Activated T-helper 2 cell treated with anti-CD3 and anti-CD28 coated beads, Interferon-gamma antibody, Interleukin-2, Interleukin-4, amounts not matched to agents 10 μg/mL and 5 μg/mL and 100 μg/mL, durations not matched to agents 14 hours and 24 hours and 36 hours (primary cell): ENCODE measurements at regions of chrX and their contacts with region 1.

Region 1: DNA sequence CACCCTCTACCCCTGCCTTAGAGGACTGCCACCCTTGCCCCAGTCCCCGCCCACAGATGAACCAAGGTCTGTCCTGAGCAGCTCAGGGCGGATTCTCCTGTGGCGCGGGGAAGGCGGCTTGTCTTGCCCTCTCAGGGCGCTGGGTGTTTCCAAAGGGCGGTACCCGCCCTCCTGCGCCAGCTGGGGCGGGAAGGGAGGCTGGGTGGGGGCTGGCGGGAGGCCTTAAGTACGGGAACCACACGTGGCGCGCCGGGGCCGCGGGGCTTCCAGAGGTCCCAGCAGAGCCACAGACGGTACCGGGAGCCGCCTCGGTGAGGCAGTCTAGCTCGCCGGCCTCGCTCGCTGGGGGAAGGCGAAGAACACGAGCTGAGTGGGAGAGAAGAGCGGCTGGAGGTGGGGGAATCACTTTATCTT is 361.1 kb downstream of the MID1IP1 start:
- DNase-seq: peak; percentile 24
- H3K4me3 Mint-ChIP-seq: peak overlapping the region; percentile 56
- H3K27ac Mint-ChIP-seq: peak overlapping the region; percentile 98
- H3K4me1 Mint-ChIP-seq: peaks cover 65% of the 10 kb centered on the region
- H3K27me3 Mint-ChIP-seq: no peaks in the 10 kb centered on the region

Region 2: DNA sequence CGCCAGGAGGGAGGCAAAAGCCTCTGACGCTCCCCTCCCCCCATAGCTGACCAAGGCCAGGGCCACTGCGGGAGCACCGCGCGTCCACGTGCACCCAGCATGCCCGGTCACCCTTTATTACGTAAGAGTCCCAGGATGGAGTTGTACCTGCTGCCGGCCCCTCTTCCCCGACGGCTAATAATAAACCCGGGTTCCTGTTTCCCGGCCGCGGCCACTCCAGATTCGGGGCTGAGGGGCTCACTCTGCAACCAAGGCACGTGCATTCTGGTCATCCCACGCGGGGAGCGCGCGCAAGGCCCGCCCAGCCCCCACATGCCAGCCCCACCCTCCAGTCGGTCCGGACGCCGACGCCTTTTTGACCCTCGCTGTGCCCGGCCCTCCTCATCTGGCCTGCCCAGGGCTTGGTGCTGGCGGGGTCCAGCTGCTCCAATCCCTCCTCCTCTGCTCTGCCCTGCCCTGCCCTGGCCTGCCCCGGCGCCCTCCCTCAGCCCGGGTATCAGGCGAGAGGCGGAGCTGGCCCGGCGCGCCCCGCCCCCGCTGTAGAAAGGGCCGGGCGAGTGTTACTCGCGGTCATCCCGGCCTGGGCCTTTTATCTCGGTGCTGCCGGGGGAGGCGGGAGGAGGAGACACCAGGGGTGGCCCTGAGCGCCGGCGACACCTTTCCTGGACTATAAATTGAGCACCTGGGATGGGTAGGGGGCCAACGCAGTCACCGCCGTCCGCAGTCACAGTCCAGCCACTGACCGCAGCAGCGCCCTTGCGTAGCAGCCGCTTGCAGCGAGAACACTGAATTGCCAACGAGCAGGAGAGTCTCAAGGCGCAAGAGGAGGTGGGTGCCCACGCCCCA is 358.5 kb before region 1 on chrX:
- intact Hi-C with region 1: loop called (anchors 5 kb)
- DNase-seq: peak; percentile 74
- H3K4me3 Mint-ChIP-seq: peak overlapping the region; percentile 100
- H3K27ac Mint-ChIP-seq: peak overlapping the region; percentile 98
- H3K4me1 Mint-ChIP-seq: peaks cover 15% of the 10 kb centered on the region
- H3K27me3 Mint-ChIP-seq: no peaks in the 10 kb centered on the region

Region 3: GRCh38 chrX:39196192-39197102 is 34.1 kb after region 1 on chrX:
- intact Hi-C with region 1: loop called (anchors 1 kb)
- DNase-seq: peak; percentile 60
- H3K4me3 Mint-ChIP-seq: peak overlapping the region; percentile 44
- H3K27ac Mint-ChIP-seq: peak overlapping the region; percentile 92
- H3K4me1 Mint-ChIP-seq: peaks cover 69% of the 10 kb centered on the region
- H3K27me3 Mint-ChIP-seq: no peaks in the 10 kb centered on the region

Region 4: DNA sequence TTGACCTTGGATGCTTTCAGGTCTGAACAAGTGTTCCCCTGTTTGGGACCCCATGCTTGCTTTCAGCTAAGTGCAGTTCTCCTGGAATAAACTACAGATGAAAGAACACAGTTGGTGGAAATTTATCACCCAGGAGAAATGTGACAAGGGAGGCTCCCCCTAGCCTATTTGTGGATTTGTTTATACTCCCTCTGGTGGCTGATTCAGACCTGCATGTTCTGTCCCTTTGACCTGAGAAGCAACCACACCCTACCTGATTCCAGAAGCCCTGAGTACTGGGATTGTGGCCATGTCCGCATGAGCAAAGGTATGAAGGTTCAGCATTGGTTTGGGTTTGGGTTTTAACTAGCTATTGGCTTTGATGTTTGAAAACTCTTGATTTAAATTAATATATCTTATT is 79.9 kb after region 1 on chrX:
- intact Hi-C with region 1: loop called (anchors 5 kb)
- DNase-seq: no peak
- H3K4me3 Mint-ChIP-seq: no peak overlapping the region
- H3K27ac Mint-ChIP-seq: no peak overlapping the region
- H3K4me1 Mint-ChIP-seq: peaks cover 24% of the 10 kb centered on the region
- H3K27me3 Mint-ChIP-seq: no peaks in the 10 kb centered on the region

Region 5: GRCh38 chrX:39261446-39262147 is 99.3 kb after region 1 on chrX:
- intact Hi-C with region 1: no loop called
- DNase-seq: no peak
- H3K4me3 Mint-ChIP-seq: no peak overlapping the region
- H3K27ac Mint-ChIP-seq: peak overlapping the region; percentile 75
- H3K4me1 Mint-ChIP-seq: peaks cover 40% of the 10 kb centered on the region
- H3K27me3 Mint-ChIP-seq: no peaks in the 10 kb centered on the region

Region 6: GRCh38 chrX:39491548-39492297 is 329.4 kb after region 1 on chrX:
- intact Hi-C with region 1: loop called (anchors 5 kb)
- DNase-seq: peak; percentile 39
- H3K4me3 Mint-ChIP-seq: peak overlapping the region; percentile 22
- H3K27ac Mint-ChIP-seq: peak overlapping the region; percentile 74
- H3K4me1 Mint-ChIP-seq: peaks cover 44% of the 10 kb centered on the region
- H3K27me3 Mint-ChIP-seq: no peaks in the 10 kb centered on the region

Region 7: DNA sequence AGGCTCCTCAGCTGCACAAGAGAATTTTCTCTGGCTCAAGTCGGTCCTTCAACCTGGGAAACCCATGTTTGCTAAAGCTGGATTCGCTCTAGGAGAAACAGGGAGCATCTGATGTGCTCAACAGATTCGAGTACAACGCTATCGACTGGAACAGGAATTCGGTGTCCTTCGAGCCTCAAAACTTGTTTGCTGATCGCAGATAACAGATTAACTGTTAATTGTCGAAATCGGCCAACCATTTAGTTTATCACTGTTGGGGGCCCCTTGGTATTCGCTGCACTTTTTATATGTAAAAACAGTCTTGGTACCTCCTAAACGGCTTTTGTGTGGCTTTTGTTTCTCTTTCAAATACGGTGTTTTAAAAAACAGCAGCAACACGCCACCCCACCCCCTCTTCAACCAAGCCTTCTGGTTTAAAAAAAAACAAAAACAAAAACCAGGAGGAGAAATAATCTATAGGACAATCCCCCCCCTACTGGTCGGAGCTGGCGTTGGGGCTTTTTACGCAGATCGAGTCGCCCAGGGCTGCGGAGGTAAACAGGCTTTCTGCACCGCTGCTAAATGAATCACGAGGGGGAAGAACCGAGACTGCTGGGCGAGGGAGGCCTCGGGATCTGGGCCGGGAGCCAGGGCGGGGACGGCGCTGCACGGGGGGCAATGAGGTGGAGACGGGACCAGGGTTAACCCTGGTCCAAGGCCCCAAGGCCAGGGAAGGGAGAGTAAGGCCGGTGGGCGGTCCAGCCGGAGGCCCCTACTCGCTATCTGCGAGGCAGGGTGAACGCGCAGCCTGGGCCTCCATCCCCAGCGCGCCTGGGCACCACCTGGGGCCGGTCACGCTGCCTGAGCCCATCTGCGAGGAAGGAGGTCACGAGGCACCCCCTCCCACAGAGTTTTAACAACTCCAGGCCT is 1007.1 kb after region 1 on chrX:
- intact Hi-C with region 1: loop called (anchors 10 kb)
- DNase-seq: peak; percentile 80
- H3K4me3 Mint-ChIP-seq: peak overlapping the region; percentile 81
- H3K27ac Mint-ChIP-seq: peak overlapping the region; percentile 94
- H3K4me1 Mint-ChIP-seq: peaks cover 37% of the 10 kb centered on the region
- H3K27me3 Mint-ChIP-seq: no peaks in the 10 kb centered on the region